ENCODE measurements at regions of chr9 and their contacts with region 1.

Region 1: GRCh38 chr9:72592502-72593403 is 71.3 kb downstream of the TMC1 start:
- DNase-seq: no peak
- H3K4me3 ChIP-seq: no peak overlapping the region
- H3K27ac ChIP-seq: no peak overlapping the region
- H3K4me1 ChIP-seq: peaks cover 7 to 24% (median 21%) of the 10 kb centered on the region in 4 donors
- H3K27me3 ChIP-seq: no peaks in the 10 kb centered on the region
- CTCF ChIP-seq: peak; percentile 77 to 84 (median 83)
- EP300 ChIP-seq: no peak
- POLR2A ChIP-seq: no peak

Region 2: DNA sequence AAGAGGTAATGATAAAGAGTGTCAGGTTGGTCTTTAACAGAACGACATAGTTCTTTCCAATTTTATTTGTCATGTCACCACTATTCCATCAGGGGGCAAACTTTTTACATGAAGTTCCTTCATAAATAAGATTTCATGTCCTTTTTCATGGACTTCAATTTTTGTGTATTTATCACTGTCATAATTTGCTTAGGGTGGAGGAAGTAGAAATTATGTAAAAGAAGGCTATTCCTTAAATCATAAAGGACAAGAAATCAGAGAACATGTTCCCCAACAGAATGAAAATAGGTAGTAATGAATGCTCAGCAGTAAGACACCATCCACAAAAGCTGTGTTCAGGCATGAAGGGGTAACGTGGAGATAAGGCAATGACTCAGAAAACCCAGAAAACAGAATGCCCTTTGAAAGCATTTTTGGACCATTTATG is 300.5 kb before region 1 on chr9:
- intact Hi-C with region 1: loop called (anchors 1 kb)
- DNase-seq: no peak
- H3K4me3 ChIP-seq: no peak overlapping the region
- H3K27ac ChIP-seq: peak overlapping the region in 1 of 4 donors; percentile 34
- H3K4me1 ChIP-seq: peaks cover 6 to 25% (median 17%) of the 10 kb centered on the region in 4 donors
- H3K27me3 ChIP-seq: peaks cover 0 to 3% (median 0%) of the 10 kb centered on the region in 4 donors
- CTCF ChIP-seq: peak; percentile 67 to 70 (median 69)
- EP300 ChIP-seq: no peak
- POLR2A ChIP-seq: no peak

Measured in esophagus muscularis mucosa (tissue), 4 donors.